Left colon (tissue), 2 donors: ENCODE measurements at regions of chr9 and their contacts with region 1.

Region 1: DNA sequence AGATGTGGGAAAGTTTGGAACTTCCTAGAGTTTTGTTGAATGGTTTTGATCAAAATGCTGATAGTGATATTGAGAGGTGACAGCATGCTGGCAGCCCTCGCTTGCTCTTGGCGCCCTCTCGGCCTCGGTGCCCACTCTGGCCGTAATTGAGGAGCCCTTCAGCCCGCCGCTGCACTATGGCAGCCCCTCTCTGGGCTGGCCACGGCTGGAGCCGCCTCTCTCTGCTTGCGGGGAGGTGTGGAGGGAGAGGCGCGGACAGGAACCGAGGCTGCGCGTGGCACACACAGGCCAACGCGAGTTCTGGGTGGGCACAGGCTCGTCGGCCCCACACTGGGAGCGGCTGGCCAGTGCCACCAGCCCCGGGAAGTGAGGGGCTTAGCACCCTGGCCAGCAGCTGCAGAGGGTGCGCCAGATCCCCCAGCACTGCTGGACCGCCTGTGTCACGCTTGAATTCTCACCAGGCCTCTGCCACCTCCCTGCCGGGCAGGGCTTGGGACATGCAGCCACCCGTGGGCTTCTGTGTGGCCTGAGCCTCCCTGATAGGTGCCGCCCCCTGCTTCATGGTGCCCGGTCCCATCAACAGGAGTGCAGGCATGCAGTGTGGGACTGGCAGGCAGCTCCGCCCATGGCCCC is 488.5 kb downstream of the CYLC2 start:
- DNase-seq: no peak
- ATAC-seq: no peak

Region 2: DNA sequence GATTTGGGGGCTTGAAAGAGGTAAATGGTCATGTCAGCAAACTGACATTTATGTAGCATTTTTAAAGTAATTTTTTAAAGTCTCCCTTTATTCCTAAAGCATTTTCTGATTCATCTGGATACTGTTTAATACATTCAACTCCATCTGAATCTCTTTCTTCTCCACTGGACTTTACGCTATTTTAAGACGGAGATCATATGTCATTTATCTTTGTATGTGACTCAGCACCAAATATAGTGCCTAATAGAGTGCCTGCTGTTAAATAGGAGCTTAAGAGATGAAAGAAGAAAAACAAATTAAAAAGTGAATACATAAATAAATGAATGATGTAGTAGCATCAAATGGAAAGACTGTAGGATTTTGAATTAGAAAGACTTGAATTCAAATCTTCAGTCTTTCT is 61.7 kb after region 1 on chr9:
- intact Hi-C with region 1: loop called in 1 of 2 experiments (anchors 10 kb)
- DNase-seq: no peak
- ATAC-seq: no peak